Endothelial cell of umbilical vein (primary cell): ENCODE measurements at regions of chr11 and their contacts with region 1.

Region 1: GRCh38 chr11:75802913-75803820 is 11.8 kb upstream of the UVRAG start:
- DNase-seq: peak; percentile 84
- H3K4me3 ChIP-seq: no peak overlapping the region
- H3K27ac ChIP-seq: no peak overlapping the region
- H3K4me1 ChIP-seq: no peaks in the 10 kb centered on the region
- H3K27me3 ChIP-seq: no peaks in the 10 kb centered on the region
- CTCF ChIP-seq: peak; percentile 87 to 90
- POLR2A ChIP-seq: no peak

Region 2: GRCh38 chr11:75721855-75722668 is 81.1 kb before region 1 on chr11:
- CTCF ChIA-PET with region 1: interaction called, 25 read pairs
- POLR2A ChIA-PET with region 1: no interaction called
- dilution Hi-C with region 1: no loop called
- intact Hi-C with region 1: loop called (anchors 2 kb)
- DNase-seq: no peak
- H3K4me3 ChIP-seq: no peak overlapping the region
- H3K27ac ChIP-seq: no peak overlapping the region
- H3K4me1 ChIP-seq: no peaks in the 10 kb centered on the region
- H3K27me3 ChIP-seq: peaks cover 0 to 2% of the 10 kb centered on the region in 2 experiments
- CTCF ChIP-seq: no peak
- POLR2A ChIP-seq: no peak

Region 3: GRCh38 chr11:75734491-75735180 is 68.5 kb before region 1 on chr11:
- CTCF ChIA-PET with region 1: no interaction called
- POLR2A ChIA-PET with region 1: no interaction called
- dilution Hi-C with region 1: no loop called
- intact Hi-C with region 1: no loop called
- DNase-seq: no peak
- H3K4me3 ChIP-seq: no peak overlapping the region
- H3K27ac ChIP-seq: no peak overlapping the region
- H3K4me1 ChIP-seq: no peaks in the 10 kb centered on the region
- H3K27me3 ChIP-seq: peaks cover 4 to 11% of the 10 kb centered on the region in 2 experiments
- CTCF ChIP-seq: no peak
- POLR2A ChIP-seq: no peak

Region 4: DNA sequence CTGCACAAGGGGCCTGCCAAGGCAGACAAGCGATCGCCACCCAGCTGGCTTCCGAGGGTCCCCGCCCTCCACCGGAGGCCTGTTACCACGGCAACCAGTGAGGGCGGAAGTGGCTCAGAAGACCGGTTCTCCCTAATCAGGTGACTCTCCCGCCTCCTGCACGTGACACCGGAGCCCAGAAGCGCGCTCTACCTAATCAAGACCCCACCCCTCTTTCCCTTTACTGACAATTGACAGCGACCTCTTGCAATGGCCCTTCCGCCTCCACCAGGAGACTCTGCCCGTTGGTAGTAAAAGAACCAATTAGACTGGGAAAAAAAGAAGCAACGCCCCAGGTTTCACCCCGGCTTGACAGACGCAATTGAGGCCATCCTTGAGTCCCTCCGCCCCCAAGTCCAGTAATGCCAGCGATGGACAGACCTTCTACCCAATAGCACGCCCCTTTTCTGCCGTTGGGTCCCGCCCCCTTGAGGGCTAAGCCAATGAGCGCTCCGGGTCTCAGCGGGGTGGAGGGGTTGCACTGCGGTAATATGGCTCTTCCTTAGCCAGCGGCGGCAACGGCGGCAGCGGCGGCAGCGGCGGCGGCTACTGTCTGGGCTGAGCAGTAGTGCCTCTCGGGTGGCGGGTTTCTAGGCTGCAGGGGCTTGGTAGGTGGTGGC is 11.6 kb after region 1 on chr11 and contains the start of gene UVRAG:
- CTCF ChIA-PET with region 1: interaction called, 59 read pairs
- POLR2A ChIA-PET with region 1: no interaction called
- dilution Hi-C with region 1: no loop called
- intact Hi-C with region 1: loop called (anchors 1 kb)
- DNase-seq: peak; percentile 100
- H3K4me3 ChIP-seq: peak within 1 kb of the TSS; percentile 90 to 95 (median 93)
- H3K27ac ChIP-seq: peak within 1 kb of the TSS; percentile 88
- H3K4me1 ChIP-seq: peaks cover 35% of the 10 kb centered on the region
- H3K27me3 ChIP-seq: no peaks in the 10 kb centered on the region
- CTCF ChIP-seq: no peak
- POLR2A ChIP-seq: peak; percentile 82
- total RNA-seq, gene UVRAG: 65.6 and 67.3 TPM in 2 replicates

Region 5: DNA sequence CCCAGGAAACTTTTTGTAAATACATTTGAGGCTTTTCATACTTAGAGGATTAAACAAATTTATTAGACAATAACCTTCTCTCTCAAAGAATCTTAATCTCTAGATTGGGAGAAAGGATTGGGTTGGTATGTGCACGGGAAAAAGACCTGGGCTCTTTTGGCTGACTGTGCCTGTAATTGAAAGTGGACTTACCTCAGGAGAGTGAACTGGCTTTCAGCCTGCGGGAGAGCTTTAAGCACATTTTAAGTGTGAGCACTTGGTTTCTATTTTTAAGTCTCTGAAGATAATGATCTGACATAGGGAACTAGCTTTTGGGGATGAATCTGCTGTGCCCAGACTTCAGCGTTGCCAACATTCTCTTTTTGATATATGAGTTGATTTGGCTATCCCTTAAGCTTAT is 47.6 kb after region 1 on chr11:
- CTCF ChIA-PET with region 1: interaction called, 16 read pairs
- POLR2A ChIA-PET with region 1: no interaction called
- dilution Hi-C with region 1: no loop called
- intact Hi-C with region 1: no loop called
- DNase-seq: peak; percentile 23
- H3K4me3 ChIP-seq: no peak overlapping the region
- H3K27ac ChIP-seq: peak overlapping the region; percentile 20
- H3K4me1 ChIP-seq: peaks cover 22% of the 10 kb centered on the region
- H3K27me3 ChIP-seq: no peaks in the 10 kb centered on the region
- CTCF ChIP-seq: no peak
- POLR2A ChIP-seq: no peak

Region 6: GRCh38 chr11:75896843-75897419 is 93.8 kb after region 1 on chr11:
- CTCF ChIA-PET with region 1: interaction called, 11 read pairs
- POLR2A ChIA-PET with region 1: no interaction called
- dilution Hi-C with region 1: no loop called
- intact Hi-C with region 1: no loop called
- DNase-seq: peak; percentile 63
- H3K4me3 ChIP-seq: no peak overlapping the region
- H3K27ac ChIP-seq: no peak overlapping the region
- H3K4me1 ChIP-seq: no peaks in the 10 kb centered on the region
- H3K27me3 ChIP-seq: no peaks in the 10 kb centered on the region
- CTCF ChIP-seq: peak; percentile 31 to 35
- POLR2A ChIP-seq: no peak

Region 7: GRCh38 chr11:75966546-75967287 is 163.6 kb after region 1 on chr11:
- CTCF ChIA-PET with region 1: no interaction called
- POLR2A ChIA-PET with region 1: no interaction called
- dilution Hi-C with region 1: no loop called
- intact Hi-C with region 1: no loop called
- DNase-seq: peak; percentile 83
- H3K4me3 ChIP-seq: peak overlapping the region in 1 of 3 experiments; percentile 1
- H3K27ac ChIP-seq: peak overlapping the region; percentile 53
- H3K4me1 ChIP-seq: peaks cover 27% of the 10 kb centered on the region
- H3K27me3 ChIP-seq: no peaks in the 10 kb centered on the region
- CTCF ChIP-seq: no peak
- POLR2A ChIP-seq: no peak